Endothelial cell of umbilical vein (primary cell): ENCODE measurements at regions of chr1 and their contacts with region 1.

Region 1: DNA sequence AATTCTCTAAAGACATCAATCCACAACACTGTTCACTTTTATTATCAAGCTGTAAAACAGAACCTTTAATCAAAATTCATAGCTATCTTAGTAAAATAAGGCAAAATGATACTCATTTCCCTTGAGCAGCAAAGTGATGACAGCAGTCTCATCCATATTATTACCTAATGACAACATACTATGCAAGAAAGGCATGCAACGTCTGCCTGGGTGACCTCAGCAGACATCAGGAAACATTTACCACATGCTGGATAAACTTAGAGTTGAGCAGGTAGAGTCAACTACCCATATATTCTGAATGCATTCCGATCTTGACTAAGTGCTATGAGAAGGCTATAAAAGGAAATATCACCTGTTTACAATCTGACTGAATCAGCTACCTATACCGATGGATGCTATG is 145.1 kb downstream of the SIPA1L2 start:
- DNase-seq: no peak
- H3K4me3 ChIP-seq: no peak overlapping the region
- H3K27ac ChIP-seq: no peak overlapping the region
- H3K4me1 ChIP-seq: no peaks in the 10 kb centered on the region
- H3K27me3 ChIP-seq: no peaks in the 10 kb centered on the region
- CTCF ChIP-seq: no peak
- POLR2A ChIP-seq: no peak

Region 2: DNA sequence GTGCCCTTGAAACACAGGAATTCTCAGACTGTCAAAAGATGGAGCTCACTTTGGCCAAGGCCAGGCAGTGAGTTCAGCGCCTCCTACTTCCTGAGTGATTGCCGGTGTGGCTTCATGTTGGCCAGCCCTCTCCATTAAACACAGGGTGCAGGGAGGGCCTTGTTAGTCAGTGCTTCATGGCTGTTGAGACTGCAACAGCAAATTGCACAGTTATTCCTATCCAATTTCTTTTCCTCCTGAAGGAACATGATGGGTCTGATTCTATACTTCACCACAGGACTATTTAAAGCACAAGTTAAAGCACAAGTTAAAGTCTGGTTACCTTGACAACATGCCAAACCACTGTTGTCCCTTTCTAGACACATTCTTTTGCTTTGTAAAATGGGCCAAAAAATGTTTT is 11.5 kb before region 1 on chr1:
- CTCF ChIA-PET with region 1: interaction called, 12 read pairs
- POLR2A ChIA-PET with region 1: no interaction called
- dilution Hi-C with region 1: no loop called
- intact Hi-C with region 1: no loop called
- DNase-seq: no peak
- H3K4me3 ChIP-seq: no peak overlapping the region
- H3K27ac ChIP-seq: no peak overlapping the region
- H3K4me1 ChIP-seq: peaks cover 17% of the 10 kb centered on the region
- H3K27me3 ChIP-seq: no peaks in the 10 kb centered on the region
- CTCF ChIP-seq: no peak
- POLR2A ChIP-seq: no peak

Region 3: DNA sequence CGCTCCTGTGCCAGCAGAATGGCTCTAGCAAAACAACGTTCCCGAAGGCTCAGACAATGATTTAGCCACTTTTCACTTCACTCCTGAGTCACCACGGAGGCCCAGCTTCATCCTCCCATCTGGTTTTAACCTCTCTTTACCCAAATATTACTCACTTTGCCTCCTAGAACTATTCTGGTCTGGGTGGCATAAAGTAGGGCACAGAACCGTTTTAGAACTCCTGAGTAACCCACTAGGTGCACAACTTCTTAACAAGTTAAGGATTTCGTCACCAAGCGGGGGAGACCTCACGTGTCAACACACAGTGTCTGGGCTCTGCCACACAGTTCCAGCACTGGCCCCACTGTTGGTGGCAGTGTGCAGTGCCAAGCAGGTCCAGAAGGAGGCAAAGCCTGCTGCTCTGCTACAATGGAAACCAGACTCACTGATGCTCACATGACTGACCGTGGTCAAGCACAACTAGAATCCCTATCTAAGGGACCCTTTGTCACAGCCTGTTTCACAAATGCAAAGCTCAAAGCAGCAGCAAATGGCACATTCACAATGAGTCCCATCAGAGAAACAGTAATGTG is 23.4 kb after region 1 on chr1:
- CTCF ChIA-PET with region 1: no interaction called
- POLR2A ChIA-PET with region 1: no interaction called
- dilution Hi-C with region 1: no loop called
- intact Hi-C with region 1: no loop called
- DNase-seq: no peak
- H3K4me3 ChIP-seq: no peak overlapping the region
- H3K27ac ChIP-seq: no peak overlapping the region
- H3K4me1 ChIP-seq: no peaks in the 10 kb centered on the region
- H3K27me3 ChIP-seq: no peaks in the 10 kb centered on the region
- CTCF ChIP-seq: peak; percentile 3 to 25
- POLR2A ChIP-seq: no peak